ENCODE measurements at regions of chr12 and their contacts with region 1.

Region 1: DNA sequence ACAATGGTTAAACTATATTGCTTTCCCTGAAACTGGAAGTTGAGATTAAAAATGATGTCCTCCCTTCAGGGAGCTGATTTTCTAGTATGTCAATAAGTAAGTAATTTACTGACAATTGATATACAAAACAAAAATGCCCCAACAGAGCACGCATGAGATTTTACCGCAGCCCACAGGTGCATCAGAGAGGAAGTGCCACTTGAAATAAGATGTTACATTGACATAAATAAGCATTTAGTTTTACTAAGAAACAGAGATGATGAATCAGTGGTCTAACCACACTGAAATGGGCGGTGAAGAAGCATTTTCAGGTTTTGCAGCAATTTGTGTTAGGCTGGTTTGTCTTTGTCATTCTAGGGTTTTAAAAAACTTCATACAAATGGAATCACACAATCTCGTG is 8.8 kb upstream of the CLECL1 start:
- DNase-seq: peak; percentile 88
- ATAC-seq: peak; percentile 80
- H3K4me3 Mint-ChIP-seq: peak overlapping the region; percentile 67
- H3K27ac Mint-ChIP-seq: peak overlapping the region; percentile 79
- H3K4me1 Mint-ChIP-seq: peaks cover 72% of the 10 kb centered on the region
- H3K27me3 Mint-ChIP-seq: no peaks in the 10 kb centered on the region

Region 2: GRCh38 chr12:9634177-9634803 is 107.4 kb before region 1 on chr12:
- CTCF ChIA-PET with region 1: interaction called, 11 read pairs
- POLR2A ChIA-PET with region 1: no interaction called
- intact Hi-C with region 1: loop called (anchors 2 kb)
- DNase-seq: peak; percentile 88
- ATAC-seq: peak; percentile 85
- H3K4me3 Mint-ChIP-seq: no peak overlapping the region
- H3K27ac Mint-ChIP-seq: peak overlapping the region; percentile 82
- H3K4me1 Mint-ChIP-seq: peaks cover 43% of the 10 kb centered on the region
- H3K27me3 Mint-ChIP-seq: no peaks in the 10 kb centered on the region

Region 3: DNA sequence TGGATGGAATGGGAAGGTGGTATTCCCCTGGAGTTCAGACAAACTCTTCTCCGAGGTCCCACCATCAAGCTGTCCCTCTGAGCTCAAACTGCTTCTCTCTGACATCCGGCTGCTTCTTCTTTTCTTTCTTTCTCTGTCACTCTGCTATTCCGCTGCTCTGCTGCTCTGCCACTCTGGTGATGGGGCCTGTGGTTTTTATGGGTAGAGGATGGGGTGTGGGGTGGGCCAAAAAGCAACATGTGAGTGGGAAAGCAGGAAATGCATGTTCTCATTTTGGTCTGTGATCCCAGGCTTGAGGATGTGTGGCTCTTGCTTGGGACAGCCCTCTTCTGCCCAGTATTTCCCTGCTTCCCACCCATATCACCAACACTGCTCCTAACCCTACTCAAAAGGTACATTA is 39.5 kb before region 1 on chr12:
- CTCF ChIA-PET with region 1: interaction called, 20 read pairs
- POLR2A ChIA-PET with region 1: no interaction called
- intact Hi-C with region 1: loop called in 1 of 2 experiments (anchors 5 kb)
- DNase-seq: peak; percentile 71
- ATAC-seq: peak; percentile 53
- H3K4me3 Mint-ChIP-seq: peak overlapping the region; percentile 19
- H3K27ac Mint-ChIP-seq: peak overlapping the region; percentile 89
- H3K4me1 Mint-ChIP-seq: peaks cover 75% of the 10 kb centered on the region
- H3K27me3 Mint-ChIP-seq: no peaks in the 10 kb centered on the region

Region 4: GRCh38 chr12:9760699-9761418 is 19.1 kb after region 1 on chr12 and contains the start of gene CD69:
- CTCF ChIA-PET with region 1: interaction called, 125 read pairs
- POLR2A ChIA-PET with region 1: interaction called, 31 read pairs
- intact Hi-C with region 1: no loop called
- DNase-seq: peak; percentile 87
- ATAC-seq: peak; percentile 55
- H3K4me3 Mint-ChIP-seq: peak within 1 kb of the TSS; percentile 99
- H3K27ac Mint-ChIP-seq: peak within 1 kb of the TSS; percentile 100
- H3K4me1 Mint-ChIP-seq: peaks cover 49% of the 10 kb centered on the region
- H3K27me3 Mint-ChIP-seq: no peaks in the 10 kb centered on the region
- total RNA-seq, gene CD69: 97.9 to 127 TPM

Region 5: GRCh38 chr12:9925708-9926393 is 184.1 kb after region 1 on chr12:
- CTCF ChIA-PET with region 1: interaction called, 14 read pairs
- POLR2A ChIA-PET with region 1: no interaction called
- intact Hi-C with region 1: no loop called
- DNase-seq: peak; percentile 19
- ATAC-seq: peak; percentile 61
- H3K4me3 Mint-ChIP-seq: peak overlapping the region; percentile 10
- H3K27ac Mint-ChIP-seq: peak overlapping the region; percentile 12
- H3K4me1 Mint-ChIP-seq: peaks cover 15% of the 10 kb centered on the region
- H3K27me3 Mint-ChIP-seq: peaks cover 2% of the 10 kb centered on the region

Region 6: GRCh38 chr12:10027721-10028120 is 286.0 kb after region 1 on chr12:
- CTCF ChIA-PET with region 1: interaction called, 4 read pairs
- POLR2A ChIA-PET with region 1: no interaction called
- intact Hi-C with region 1: loop called in 1 of 2 experiments (anchors 10 kb)
- DNase-seq: no peak
- ATAC-seq: no peak
- H3K4me3 Mint-ChIP-seq: no peak overlapping the region
- H3K27ac Mint-ChIP-seq: no peak overlapping the region
- H3K4me1 Mint-ChIP-seq: no peaks in the 10 kb centered on the region
- H3K27me3 Mint-ChIP-seq: peaks cover 2% of the 10 kb centered on the region

Region 7: GRCh38 chr12:10364815-10365622 is 623.3 kb after region 1 on chr12:
- CTCF ChIA-PET with region 1: no interaction called
- POLR2A ChIA-PET with region 1: no interaction called
- intact Hi-C with region 1: loop called in 1 of 2 experiments (anchors 10 kb)
- DNase-seq: peak; percentile 76
- ATAC-seq: peak; percentile 84
- H3K4me3 Mint-ChIP-seq: no peak overlapping the region
- H3K27ac Mint-ChIP-seq: no peak overlapping the region
- H3K4me1 Mint-ChIP-seq: peaks cover 3% of the 10 kb centered on the region
- H3K27me3 Mint-ChIP-seq: no peaks in the 10 kb centered on the region